HEK293T (cell line): ENCODE measurements at regions of chr20 and their contacts with region 1.

Region 1: DNA sequence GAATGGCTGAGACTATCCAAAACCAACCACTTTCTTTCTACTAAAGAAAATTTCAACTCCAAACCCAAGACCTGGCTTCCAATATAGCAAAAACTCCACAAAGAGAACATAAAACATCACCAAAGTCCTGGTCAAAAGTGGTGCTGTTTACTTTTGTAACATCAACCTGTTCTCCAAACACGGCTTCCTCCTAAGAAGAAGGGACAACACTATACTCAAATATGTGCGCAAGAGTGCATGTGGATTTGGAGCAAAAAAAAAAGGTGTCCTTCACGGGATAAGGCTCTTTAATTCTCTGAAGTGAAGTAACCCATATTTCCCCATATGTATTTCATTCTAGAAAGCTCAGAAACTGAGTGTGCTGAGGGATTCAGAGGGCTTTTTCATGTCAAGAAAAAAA is 6.6 kb downstream of the B4GALT5 start:
- DNase-seq: no peak

Region 2: GRCh38 chr20:49631061-49631788 is 75.9 kb before region 1 on chr20:
- CTCF ChIA-PET with region 1: interaction called, 10 read pairs
- POLR2A ChIA-PET with region 1: no interaction called
- DNase-seq: no peak